Naive thymus-derived CD4-positive, alpha-beta T cell (primary cell): ENCODE measurements at regions of chr10 and their contacts with region 1.

Region 1: DNA sequence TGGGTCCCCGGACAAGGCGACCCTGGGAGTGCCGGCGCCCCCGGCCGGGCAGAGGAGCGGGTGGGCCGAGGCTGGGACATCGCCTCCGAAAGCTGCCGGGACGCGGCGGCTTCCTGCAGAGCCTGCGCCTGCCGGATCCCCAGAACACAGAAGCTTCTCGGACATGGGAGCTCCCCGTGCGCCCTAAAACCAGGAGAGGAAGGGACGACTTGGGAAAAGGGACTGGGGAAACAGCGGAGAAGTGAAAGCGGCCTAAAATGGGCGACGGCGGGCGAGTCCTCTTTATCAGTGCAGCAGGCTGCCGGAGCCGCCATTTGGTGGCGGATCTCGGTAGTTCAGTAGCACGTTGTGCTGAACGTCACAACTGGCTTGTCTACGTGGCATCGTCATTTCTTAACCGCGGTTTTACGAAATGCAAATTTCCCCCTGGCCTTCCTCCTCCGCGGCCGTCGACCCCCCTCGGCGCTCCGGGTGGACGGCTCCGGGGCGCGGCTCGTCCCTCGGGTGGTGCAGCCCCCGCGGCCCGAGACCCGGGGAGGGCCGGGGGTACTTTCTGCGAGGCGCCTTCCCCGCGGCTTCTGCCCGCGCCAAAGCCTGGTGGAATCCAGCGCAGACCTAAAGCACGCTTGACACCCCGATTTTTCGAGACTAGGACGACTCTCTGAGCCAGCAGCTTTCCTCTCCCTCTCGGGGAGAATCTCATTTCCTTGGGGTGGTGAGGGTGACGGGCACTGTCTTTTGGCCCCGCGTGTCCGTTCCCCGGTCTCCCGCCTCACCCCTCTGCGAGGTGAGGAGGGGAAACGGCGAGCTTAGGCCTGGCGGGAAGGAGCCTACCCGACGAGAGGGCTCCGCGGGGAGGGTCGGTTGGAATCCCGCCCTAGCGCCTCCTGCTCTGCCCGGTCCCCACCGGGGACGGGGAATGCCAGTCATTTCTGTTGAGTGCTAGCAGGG is 9.8 kb upstream of the SPAG6 start:
- DNase-seq: peak; percentile 51 to 83 (median 77)
- ATAC-seq: peak; percentile 90
- H3K4me3 ChIP-seq: peak overlapping the region; percentile 57
- H3K4me3 Mint-ChIP-seq: peak overlapping the region; percentile 82 to 91 (median 87)
- H3K27ac ChIP-seq: peak overlapping the region; percentile 63
- H3K27ac Mint-ChIP-seq: peak overlapping the region; percentile 84 to 95 (median 92)
- H3K4me1 ChIP-seq: peaks cover 37 to 38% of the 10 kb centered on the region in 2 donors
- H3K4me1 Mint-ChIP-seq: peaks cover 7 to 55% (median 35%) of the 10 kb centered on the region in 7 donors
- H3K27me3 ChIP-seq: peaks cover 25 to 47% of the 10 kb centered on the region in 2 donors
- H3K27me3 Mint-ChIP-seq: peaks cover 30 to 57% (median 52%) of the 10 kb centered on the region in 5 donors

Region 2: DNA sequence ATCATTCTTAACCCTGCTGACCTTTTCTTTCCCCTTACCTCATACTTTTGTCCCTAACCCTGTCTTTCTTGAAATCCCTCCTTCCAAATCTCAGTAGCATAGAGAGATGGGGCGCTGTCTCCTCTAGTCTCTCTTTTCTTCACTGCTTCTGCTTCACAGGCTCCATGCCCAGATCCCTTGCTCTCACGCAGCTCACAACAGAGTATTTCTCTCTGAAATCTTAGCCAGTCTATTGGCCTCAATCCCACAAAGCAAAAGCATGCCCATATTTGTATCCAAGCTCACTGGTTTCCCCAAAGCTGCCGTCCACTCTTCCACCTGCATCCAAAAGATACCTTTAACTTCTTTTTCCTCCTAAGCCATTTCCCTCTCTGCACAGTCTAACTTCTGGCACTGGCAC is 1992.4 kb before region 1 on chr10:
- CTCF ChIA-PET with region 1: no interaction called
- POLR2A ChIA-PET with region 1: no interaction called
- intact Hi-C with region 1: no loop called
- DNase-seq: no peak
- ATAC-seq: no peak
- H3K4me3 ChIP-seq: no peak overlapping the region
- H3K4me3 Mint-ChIP-seq: no peak overlapping the region
- H3K27ac ChIP-seq: no peak overlapping the region
- H3K27ac Mint-ChIP-seq: no peak overlapping the region
- H3K4me1 ChIP-seq: no peaks in the 10 kb centered on the region
- H3K4me1 Mint-ChIP-seq: no peaks in the 10 kb centered on the region
- H3K27me3 ChIP-seq: no peaks in the 10 kb centered on the region
- H3K27me3 Mint-ChIP-seq: peaks cover 0 to 9% (median 0%) of the 10 kb centered on the region in 5 donors

Region 3: DNA sequence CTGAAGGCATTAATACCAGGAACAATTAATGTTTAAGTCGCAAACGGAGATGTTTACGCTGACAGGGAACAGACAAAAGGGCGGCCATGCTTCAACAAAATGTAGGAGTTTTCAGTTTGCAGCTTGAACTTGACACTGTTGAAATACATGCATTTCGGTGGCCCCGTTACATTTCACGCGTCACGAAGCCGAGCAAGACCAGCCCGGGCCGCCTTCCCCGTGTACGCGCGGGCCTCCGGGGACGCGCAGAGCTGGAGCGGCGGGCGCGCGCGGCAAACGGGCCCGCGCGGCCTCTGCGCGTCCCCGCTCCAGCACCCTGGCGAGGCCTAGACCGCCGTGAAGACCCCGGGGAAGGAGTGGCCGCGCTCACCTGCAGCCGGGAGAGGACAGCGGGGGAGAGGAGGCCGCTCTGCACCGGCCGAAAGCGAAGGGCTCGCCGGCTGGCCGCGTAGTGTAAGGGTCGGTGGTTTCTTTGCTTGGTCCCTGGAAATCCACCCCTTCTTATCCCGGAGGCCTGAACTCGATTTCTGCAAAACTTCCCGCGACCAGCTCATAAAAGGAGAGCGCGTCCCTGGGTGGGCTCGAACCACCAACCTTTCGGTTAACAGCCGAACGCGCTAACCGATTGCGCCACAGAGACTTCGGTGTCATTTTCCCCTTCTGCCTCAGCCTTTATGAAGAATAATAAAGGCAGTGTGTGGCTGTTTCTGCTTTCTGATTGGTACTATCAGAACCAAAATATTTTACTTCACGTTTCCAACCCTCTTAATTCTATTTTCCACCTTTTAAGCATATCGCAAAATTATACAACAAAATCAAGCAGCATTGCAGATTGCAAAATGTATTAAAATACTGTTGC is 106.3 kb before region 1 on chr10:
- CTCF ChIA-PET with region 1: no interaction called
- POLR2A ChIA-PET with region 1: interaction called, 7 read pairs
- intact Hi-C with region 1: loop called (anchors 1 kb)
- DNase-seq: peak; percentile 74 to 94 (median 92)
- ATAC-seq: peak; percentile 95
- H3K4me3 ChIP-seq: peak overlapping the region; percentile 85
- H3K4me3 Mint-ChIP-seq: peak overlapping the region; percentile 84 to 99 (median 94)
- H3K27ac ChIP-seq: peak overlapping the region; percentile 70
- H3K27ac Mint-ChIP-seq: peak overlapping the region; percentile 96 to 100 (median 99)
- H3K4me1 ChIP-seq: peaks cover 6 to 8% of the 10 kb centered on the region in 2 donors
- H3K4me1 Mint-ChIP-seq: peaks cover 11 to 27% (median 15%) of the 10 kb centered on the region in 7 donors
- H3K27me3 ChIP-seq: no peaks in the 10 kb centered on the region
- H3K27me3 Mint-ChIP-seq: peaks cover 0 to 20% (median 5%) of the 10 kb centered on the region in 5 donors